PC-3 (cell line): ENCODE measurements at regions of chr17 and their contacts with region 1.

Region 1: GRCh38 chr17:62791751-62792445 is 16.2 kb downstream of the MARCHF10 start:
- DNase-seq: peak; percentile 98
- ATAC-seq: peak; percentile 61
- H3K4me3 ChIP-seq: peak overlapping the region; percentile 27
- H3K27ac ChIP-seq: peak overlapping the region; percentile 89
- H3K4me1 ChIP-seq: peaks cover 53% of the 10 kb centered on the region
- H3K27me3 ChIP-seq: no peaks in the 10 kb centered on the region
- CTCF ChIP-seq: no peak

Region 2: GRCh38 chr17:62688398-62689160 is 103.3 kb before region 1 on chr17:
- CTCF ChIA-PET with region 1: no interaction called
- POLR2A ChIA-PET with region 1: no interaction called
- intact Hi-C with region 1: no loop called
- DNase-seq: no peak
- ATAC-seq: no peak
- H3K4me3 ChIP-seq: no peak overlapping the region
- H3K27ac ChIP-seq: no peak overlapping the region
- H3K4me1 ChIP-seq: no peaks in the 10 kb centered on the region
- H3K27me3 ChIP-seq: no peaks in the 10 kb centered on the region
- CTCF ChIP-seq: no peak

Region 3: DNA sequence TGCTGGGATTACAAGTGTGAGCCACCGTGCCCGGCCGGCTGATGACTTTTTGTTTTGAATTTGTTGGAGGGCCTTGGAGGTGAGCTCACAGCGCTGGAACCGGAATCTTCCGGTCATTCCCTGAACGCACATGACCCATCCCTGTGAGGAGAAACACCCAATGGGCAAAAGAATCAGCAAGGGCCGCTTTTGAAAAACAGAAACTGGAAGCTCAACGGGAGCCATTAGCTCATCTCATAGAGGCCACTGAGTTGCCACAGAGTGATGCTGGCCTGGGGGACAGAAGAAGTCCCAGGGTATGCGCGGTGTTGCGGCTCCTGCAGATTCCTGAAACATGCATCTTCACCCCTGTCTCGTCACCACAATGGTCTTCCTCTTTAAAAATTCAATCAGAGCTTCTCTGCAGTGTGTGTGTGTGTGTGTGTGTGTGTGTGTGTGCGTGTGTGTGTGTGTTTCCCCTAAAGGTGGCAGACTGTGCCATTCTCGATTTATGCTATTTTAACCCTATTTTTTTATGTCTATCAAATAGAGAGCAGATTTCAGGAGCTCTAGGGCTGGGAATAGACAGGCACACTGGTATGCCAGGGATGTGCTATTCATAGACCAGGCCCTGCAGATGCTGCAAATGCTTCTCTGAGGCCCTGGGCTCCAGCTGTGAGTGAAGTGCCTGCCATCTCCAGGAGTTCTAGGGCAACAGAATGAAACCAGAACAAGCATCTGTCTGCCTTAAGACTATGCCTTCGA is 52.1 kb before region 1 on chr17:
- CTCF ChIA-PET with region 1: interaction called, 11 read pairs
- POLR2A ChIA-PET with region 1: no interaction called
- intact Hi-C with region 1: no loop called
- DNase-seq: no peak
- ATAC-seq: no peak
- H3K4me3 ChIP-seq: no peak overlapping the region
- H3K27ac ChIP-seq: no peak overlapping the region
- H3K4me1 ChIP-seq: peaks cover 7% of the 10 kb centered on the region
- H3K27me3 ChIP-seq: no peaks in the 10 kb centered on the region
- CTCF ChIP-seq: no peak

Region 4: DNA sequence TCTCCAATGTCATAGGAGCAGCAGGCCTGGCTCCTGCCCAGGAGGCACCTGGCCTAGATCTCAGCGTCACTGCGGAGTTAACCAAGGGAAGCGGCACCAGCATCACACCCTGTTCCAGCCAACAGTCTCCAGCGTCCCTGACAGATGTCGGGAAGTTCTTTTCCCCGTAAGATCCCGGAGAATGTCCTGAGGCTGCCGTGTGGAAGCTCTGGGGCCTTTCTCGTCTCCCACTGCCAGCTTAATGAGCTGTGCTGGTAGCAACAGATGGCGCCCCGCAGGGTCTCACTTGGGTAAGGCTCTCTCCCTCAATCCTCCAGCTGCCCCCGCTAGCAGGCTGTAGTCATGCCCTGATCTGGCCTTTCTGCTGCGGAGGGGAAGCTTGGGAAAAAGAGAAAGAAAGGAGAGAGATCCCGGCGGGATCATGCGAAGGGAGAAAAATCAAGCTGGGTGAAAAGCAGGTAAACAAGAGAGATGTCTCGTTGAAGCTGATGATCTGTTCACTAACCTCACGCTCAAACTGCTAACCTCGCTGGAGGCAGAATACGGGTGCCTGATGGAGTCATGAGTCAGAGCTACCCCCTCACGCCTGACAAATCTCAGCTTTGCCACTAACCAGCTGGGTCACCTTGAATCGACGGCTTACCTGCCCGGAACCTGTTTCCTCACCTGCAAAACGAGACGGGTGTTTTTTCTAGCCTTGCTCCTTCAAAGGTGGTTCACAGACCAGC is 41.1 kb before region 1 on chr17:
- CTCF ChIA-PET with region 1: no interaction called
- POLR2A ChIA-PET with region 1: no interaction called
- intact Hi-C with region 1: no loop called
- DNase-seq: peak; percentile 75
- ATAC-seq: peak; percentile 63
- H3K4me3 ChIP-seq: no peak overlapping the region
- H3K27ac ChIP-seq: no peak overlapping the region
- H3K4me1 ChIP-seq: peaks cover 11% of the 10 kb centered on the region
- H3K27me3 ChIP-seq: no peaks in the 10 kb centered on the region
- CTCF ChIP-seq: no peak

Region 5: DNA sequence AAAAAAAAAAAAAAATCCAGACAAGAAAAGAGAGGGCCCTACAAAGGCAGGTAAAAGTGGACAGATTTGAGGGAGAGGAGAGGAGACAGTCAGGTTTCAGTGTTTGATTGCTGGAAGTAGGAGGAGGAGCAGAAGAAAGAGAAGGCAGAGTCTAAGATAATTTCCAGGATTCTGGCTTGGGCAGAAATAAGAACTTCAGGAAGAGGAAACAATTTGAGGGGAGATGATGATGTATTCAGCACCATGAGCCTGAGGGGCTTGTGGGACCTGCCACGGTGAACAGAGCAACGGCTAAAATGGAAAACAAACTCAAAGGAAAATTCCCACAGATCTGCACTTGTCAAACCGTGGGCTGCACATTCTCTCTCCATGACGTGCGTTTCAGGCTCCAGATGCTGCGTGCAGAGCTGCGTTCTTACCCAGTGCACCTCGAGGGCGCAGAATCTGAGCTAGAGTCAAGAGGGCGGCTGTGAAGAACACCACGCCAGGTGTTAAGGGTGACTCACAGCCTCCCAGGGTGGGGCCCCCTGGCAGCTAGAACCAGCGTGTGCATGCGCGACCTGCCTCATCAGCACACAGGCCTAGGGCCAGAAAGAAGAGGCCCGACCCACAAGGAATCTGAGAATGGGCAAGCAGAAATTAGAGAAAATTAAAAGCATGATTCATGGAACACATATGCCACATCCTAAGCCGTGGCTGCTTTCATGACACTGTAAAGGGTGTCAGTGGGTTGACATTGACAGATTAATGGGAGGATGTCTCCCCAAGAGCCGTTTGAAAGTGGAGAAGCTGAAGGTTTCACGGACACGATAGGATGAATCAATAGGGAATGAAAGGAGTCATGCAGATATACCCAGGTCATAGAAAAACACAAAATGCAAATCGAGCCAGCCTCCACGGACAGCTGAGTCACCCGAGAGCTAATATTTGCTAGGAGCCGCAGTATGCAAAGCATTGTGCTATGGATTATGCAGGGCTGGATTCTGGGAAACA is 12.9 kb before region 1 on chr17:
- CTCF ChIA-PET with region 1: interaction called, 7 read pairs
- POLR2A ChIA-PET with region 1: interaction called, 3 read pairs
- intact Hi-C with region 1: loop called (anchors 1 kb)
- DNase-seq: peak; percentile 98
- ATAC-seq: peak; percentile 88
- H3K4me3 ChIP-seq: peak overlapping the region; percentile 39
- H3K27ac ChIP-seq: peak overlapping the region; percentile 92
- H3K4me1 ChIP-seq: peaks cover 47% of the 10 kb centered on the region
- H3K27me3 ChIP-seq: no peaks in the 10 kb centered on the region
- CTCF ChIP-seq: no peak

Region 6: GRCh38 chr17:62816282-62816839 is 24.5 kb after region 1 on chr17:
- CTCF ChIA-PET with region 1: no interaction called
- POLR2A ChIA-PET with region 1: no interaction called
- intact Hi-C with region 1: no loop called
- DNase-seq: no peak
- ATAC-seq: no peak
- H3K4me3 ChIP-seq: no peak overlapping the region
- H3K27ac ChIP-seq: no peak overlapping the region
- H3K4me1 ChIP-seq: peaks cover 23% of the 10 kb centered on the region
- H3K27me3 ChIP-seq: no peaks in the 10 kb centered on the region
- CTCF ChIP-seq: no peak

Region 7: DNA sequence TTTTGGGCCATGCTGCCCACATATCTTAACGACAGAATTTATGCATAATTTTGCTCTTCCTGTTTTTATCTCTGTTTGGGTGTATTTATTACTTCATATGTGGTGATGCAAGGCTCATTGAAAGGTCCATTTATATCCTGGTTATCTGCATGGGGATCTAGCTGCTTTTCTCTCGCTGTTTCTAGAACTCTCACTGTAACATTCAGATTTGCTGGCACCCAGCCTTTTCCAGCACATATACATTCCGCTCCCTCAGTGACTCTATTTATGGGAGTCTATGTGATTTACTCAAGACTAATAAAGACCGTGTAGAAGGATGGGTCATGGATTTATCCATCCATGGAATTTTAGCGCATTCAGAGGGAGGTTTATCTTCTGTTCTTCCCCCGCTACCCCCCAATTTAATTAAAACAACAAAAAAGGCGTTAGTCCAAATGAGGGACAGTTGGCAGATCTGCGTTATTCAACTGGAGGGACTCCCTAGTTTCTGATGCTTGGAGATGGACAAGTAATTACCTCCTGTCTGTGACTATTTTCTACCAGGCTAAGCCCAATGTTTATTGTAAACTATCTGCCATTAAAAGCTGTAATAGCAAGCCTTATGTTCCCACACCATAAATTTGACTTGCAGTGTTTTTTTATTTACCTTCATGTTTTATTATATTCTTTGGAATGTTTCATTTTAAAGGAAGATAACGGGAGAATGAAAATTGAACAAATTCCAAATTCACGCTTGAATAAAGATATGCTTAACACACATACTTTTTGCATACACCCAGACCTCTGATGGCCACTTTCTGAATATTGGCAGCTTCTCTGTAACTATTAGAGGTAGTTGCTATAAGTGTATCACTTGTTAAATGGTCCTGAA is 36.1 kb after region 1 on chr17:
- CTCF ChIA-PET with region 1: no interaction called
- POLR2A ChIA-PET with region 1: no interaction called
- intact Hi-C with region 1: no loop called
- DNase-seq: peak; percentile 27
- ATAC-seq: peak; percentile 25; the same call in 1 of the 2 replicates
- H3K4me3 ChIP-seq: no peak overlapping the region
- H3K27ac ChIP-seq: no peak overlapping the region
- H3K4me1 ChIP-seq: peaks cover 35% of the 10 kb centered on the region
- H3K27me3 ChIP-seq: no peaks in the 10 kb centered on the region
- CTCF ChIP-seq: no peak